Activated T-helper 1 cell treated with anti-CD3 and anti-CD28 coated beads, Interleukin-12 subunit alpha, Interleukin-12 subunit beta, Interleukin-2, Interleukin-4 antibody, amounts not matched to agents 30 ng/mL and 10 ng/mL and 1 ng/mL, durations not matched to agents 14 hours and 24 hours and 36 hours (primary cell): ENCODE measurements at regions of chr7 and their contacts with region 1.

Region 1: DNA sequence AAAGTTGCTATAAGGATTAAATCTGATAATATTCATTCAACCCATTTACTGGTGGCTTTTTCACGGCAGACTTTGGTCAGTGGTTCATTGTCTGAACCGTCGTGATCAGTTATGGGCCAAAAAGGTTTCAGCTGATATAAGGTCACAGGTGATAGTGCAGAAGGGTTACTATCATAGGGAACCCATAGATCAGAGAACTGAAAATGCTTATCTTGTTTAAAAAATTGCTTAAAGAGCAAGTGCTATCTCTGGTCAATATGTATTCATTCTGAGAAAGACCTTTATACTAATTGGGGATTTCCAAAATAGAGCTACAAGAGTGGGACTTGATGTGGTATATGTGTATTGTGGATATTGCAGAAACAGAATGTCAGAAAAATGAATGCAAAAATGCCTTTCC is 147.8 kb upstream of the SEMA3E start:
- DNase-seq: no peak
- H3K4me3 Mint-ChIP-seq: no peak overlapping the region
- H3K27ac Mint-ChIP-seq: no peak overlapping the region
- H3K4me1 Mint-ChIP-seq: no peaks in the 10 kb centered on the region
- H3K27me3 Mint-ChIP-seq: no peaks in the 10 kb centered on the region

Region 2: DNA sequence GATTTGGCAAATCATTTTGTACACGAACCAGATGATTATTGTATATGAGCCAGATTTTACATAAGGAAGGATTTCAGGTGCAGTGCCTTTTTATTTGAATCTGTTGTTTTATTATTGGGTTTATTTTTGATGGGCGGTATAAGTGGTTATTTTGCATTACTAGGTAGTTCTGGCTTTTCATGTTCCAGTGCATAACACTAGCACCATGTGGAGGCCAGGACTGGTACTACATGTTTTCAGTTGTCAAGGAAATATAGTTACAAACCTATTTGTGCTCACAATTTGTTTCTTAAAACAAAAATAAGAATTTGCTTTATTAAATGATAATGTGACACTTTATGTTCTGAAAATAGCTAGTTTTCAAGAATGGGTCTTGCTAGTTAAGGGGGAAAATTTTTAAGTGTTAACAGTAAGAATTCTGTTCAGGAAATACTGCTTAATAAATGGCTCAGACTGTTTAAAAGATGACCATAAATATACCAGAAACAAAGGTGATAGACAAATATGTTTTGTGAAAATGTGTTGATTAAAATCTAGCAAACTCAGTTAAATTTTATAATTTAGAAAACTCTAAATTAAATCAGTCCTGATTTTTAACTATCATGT is 140.7 kb before region 1 on chr7:
- intact Hi-C with region 1: no loop called
- DNase-seq: no peak
- H3K4me3 Mint-ChIP-seq: no peak overlapping the region
- H3K27ac Mint-ChIP-seq: no peak overlapping the region
- H3K4me1 Mint-ChIP-seq: no peaks in the 10 kb centered on the region
- H3K27me3 Mint-ChIP-seq: peaks cover 2% of the 10 kb centered on the region

Region 3: GRCh38 chr7:83835424-83835823 is 38.7 kb after region 1 on chr7:
- intact Hi-C with region 1: loop called (anchors 1 kb)
- DNase-seq: no peak
- H3K4me3 Mint-ChIP-seq: no peak overlapping the region
- H3K27ac Mint-ChIP-seq: no peak overlapping the region
- H3K4me1 Mint-ChIP-seq: no peaks in the 10 kb centered on the region
- H3K27me3 Mint-ChIP-seq: no peaks in the 10 kb centered on the region

Region 4: DNA sequence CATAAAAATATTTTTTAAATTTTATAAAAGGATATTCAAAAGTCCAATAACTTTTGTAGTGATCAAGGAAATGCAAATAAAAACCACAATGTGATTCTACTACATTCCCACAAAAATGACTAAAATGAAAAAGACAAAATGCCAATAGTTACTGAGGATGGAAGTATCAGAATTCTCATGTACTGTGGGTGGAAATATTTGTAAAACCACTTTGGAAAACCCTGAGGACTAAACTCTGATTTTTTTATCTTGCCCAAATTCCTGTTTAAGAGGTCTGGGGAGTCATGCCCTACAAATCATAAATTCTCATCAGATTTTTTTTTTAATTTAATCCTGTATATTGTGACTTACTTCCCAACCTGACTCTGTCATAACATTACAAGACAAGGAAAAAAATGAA is 1399.9 kb after region 1 on chr7:
- intact Hi-C with region 1: no loop called
- DNase-seq: no peak
- H3K4me3 Mint-ChIP-seq: no peak overlapping the region
- H3K27ac Mint-ChIP-seq: no peak overlapping the region
- H3K4me1 Mint-ChIP-seq: no peaks in the 10 kb centered on the region
- H3K27me3 Mint-ChIP-seq: peaks cover 2% of the 10 kb centered on the region